ENCODE measurements at regions of chr2 and their contacts with region 1.

Region 1: GRCh38 chr2:213151437-213152064 is at the start of gene IKZF2:
- DNase-seq: peak; percentile 89 to 94
- ATAC-seq: peak; percentile 91
- H3K4me3 ChIP-seq: peak within 1 kb of the TSS; percentile 95 to 98
- H3K27ac ChIP-seq: peak within 1 kb of the TSS; percentile 51 to 86
- H3K4me1 ChIP-seq: peaks cover 0 to 3% of the 10 kb centered on the region in 2 donors
- H3K27me3 ChIP-seq: no peaks in the 10 kb centered on the region
- total RNA-seq, gene IKZF2: 9.9 to 17.1 TPM

Region 2: DNA sequence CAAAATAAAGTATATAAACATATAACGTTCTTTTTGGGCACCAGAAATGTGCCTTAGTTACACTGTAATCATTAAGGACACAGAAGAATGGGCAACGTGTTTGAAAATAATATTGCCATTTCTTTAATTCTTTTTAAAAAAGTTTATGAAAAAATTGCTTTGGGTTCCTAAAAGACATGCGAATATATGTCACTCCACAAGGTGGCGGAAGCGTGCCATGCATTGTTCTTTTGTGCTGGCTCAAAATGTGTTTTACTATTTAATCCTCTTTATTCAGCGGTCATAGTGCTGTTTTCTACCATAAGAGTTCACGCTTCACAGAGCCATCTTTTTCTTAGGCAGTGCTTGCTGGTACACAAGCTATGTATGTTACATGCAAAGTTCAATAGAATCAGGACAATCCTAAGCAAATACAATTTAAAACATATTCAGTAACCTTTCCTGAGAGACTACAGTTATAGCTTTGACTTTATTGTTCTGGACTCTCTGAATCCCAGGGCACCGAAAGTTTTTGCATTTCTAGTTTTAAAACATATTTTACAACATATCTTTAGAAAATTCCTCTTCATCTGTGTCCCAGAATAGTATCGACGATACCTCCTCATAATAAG is 465.2 kb before region 1 on chr2:
- intact Hi-C with region 1: loop called in 1 of 2 experiments (anchors 5 kb)
- DNase-seq: peak; percentile 57 to 80
- ATAC-seq: peak; percentile 77
- H3K4me3 ChIP-seq: no peak overlapping the region
- H3K27ac ChIP-seq: no peak overlapping the region
- H3K4me1 ChIP-seq: no peaks in the 10 kb centered on the region
- H3K27me3 ChIP-seq: no peaks in the 10 kb centered on the region

Region 3: DNA sequence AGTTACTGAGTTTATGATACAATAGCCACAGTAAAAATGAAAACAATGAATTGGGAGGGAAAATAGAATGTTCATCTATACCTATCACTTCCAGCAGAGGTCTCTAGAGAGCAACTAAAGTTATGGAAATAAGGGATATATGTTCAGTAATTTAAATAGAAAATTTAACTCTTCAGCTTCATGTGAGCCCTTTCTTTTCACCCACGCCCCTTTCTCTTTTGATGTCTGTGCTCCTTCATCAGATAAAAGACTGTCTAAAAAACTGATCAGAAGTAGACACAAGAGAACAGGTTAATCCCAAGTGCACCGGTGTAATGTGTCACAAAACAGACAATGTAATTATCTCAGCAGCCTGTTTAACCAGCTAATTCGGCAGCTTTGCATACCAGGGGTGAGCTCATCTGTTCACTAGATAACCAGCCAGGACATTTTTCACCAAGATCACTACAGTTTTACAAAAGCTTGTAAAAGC is 374.5 kb before region 1 on chr2:
- intact Hi-C with region 1: loop called (anchors 2 kb)
- DNase-seq: no peak
- ATAC-seq: no peak
- H3K4me3 ChIP-seq: no peak overlapping the region
- H3K27ac ChIP-seq: no peak overlapping the region
- H3K4me1 ChIP-seq: no peaks in the 10 kb centered on the region
- H3K27me3 ChIP-seq: no peaks in the 10 kb centered on the region

Region 4: GRCh38 chr2:213032607-213033006 is 118.9 kb before region 1 on chr2:
- intact Hi-C with region 1: no loop called
- DNase-seq: no peak
- ATAC-seq: no peak
- H3K4me3 ChIP-seq: no peak overlapping the region
- H3K27ac ChIP-seq: no peak overlapping the region
- H3K4me1 ChIP-seq: no peaks in the 10 kb centered on the region
- H3K27me3 ChIP-seq: no peaks in the 10 kb centered on the region

Region 5: DNA sequence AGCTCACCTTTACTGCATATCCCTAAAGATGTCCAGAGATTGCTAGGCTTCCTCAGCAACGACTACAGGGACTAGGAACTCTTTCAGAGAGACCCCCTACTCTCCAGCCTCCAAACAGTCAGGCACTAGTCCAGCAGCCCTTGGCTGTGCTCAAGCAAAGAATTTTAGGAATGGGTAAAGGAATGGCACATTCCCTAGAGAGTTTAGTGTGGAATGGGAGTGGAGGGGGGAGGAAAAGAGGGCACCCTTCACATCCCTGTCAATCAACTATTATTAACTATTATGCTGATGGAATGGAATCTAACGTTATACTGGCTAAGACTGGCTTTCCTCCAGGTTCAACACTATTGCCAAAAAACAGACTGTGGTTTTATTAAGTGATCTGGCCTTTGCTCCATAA is 65.0 kb before region 1 on chr2:
- intact Hi-C with region 1: loop called in 1 of 2 experiments (anchors 10 kb)
- DNase-seq: no peak
- ATAC-seq: no peak
- H3K4me3 ChIP-seq: no peak overlapping the region
- H3K27ac ChIP-seq: no peak overlapping the region
- H3K4me1 ChIP-seq: peaks cover 0 to 9% of the 10 kb centered on the region in 2 donors
- H3K27me3 ChIP-seq: no peaks in the 10 kb centered on the region

Region 6: DNA sequence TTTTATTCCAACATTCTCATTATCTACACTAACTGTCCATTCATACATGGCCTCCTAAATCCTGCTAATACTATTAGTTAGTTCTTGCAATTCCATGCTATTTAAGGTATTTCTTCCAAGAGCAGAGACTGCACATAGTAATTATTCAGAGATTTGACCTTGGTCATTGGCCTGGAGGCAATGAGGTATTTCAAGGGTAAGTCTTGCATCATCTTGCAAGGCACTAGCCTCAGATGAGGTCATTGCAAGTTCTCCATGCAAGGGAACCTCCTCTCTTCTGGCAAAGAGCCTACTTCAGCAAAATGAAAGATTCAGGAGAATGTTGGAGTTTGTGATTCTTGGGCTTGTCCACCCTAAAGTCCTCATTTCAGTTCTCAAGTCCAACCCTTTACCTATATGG is 48.3 kb after region 1 on chr2:
- intact Hi-C with region 1: loop called in 1 of 2 experiments (anchors 10 kb)
- DNase-seq: no peak
- ATAC-seq: no peak
- H3K4me3 ChIP-seq: no peak overlapping the region
- H3K27ac ChIP-seq: no peak overlapping the region
- H3K4me1 ChIP-seq: peaks cover 0 to 7% of the 10 kb centered on the region in 2 donors
- H3K27me3 ChIP-seq: no peaks in the 10 kb centered on the region